ENCODE measurements at regions of chr6 and their contacts with region 1.

Region 1: GRCh38 chr6:31529329-31530150 is 778 bp downstream of the MCCD1 start:
- DNase-seq: no peak
- ATAC-seq: peak; percentile 3 to 17
- H3K4me3 ChIP-seq: no peak overlapping the region
- H3K27ac ChIP-seq: no peak overlapping the region
- H3K4me1 ChIP-seq: no peaks in the 10 kb centered on the region
- H3K27me3 ChIP-seq: no peaks in the 10 kb centered on the region

Region 2: GRCh38 chr6:31493875-31494694 is 35.5 kb before region 1 on chr6:
- intact Hi-C with region 1: loop called in 1 of 4 experiments (anchors 5 kb)
- DNase-seq: peak; percentile 82 to 94 (median 92)
- ATAC-seq: peak; percentile 84 to 88
- H3K4me3 ChIP-seq: peak overlapping the region; percentile 83
- H3K27ac ChIP-seq: peak overlapping the region; percentile 87
- H3K4me1 ChIP-seq: no peaks in the 10 kb centered on the region
- H3K27me3 ChIP-seq: no peaks in the 10 kb centered on the region